ENCODE measurements at regions of chr20 and their contacts with region 1.

Region 1: GRCh38 chr20:54382422-54382821 is 93.0 kb upstream of the DOK5 start:
- DNase-seq: no peak

Region 2: GRCh38 chr20:54284934-54285704 is 97.3 kb before region 1 on chr20:
- intact Hi-C with region 1: no loop called
- DNase-seq: no peak

Region 3: GRCh38 chr20:54449158-54449557 is 66.7 kb after region 1 on chr20:
- intact Hi-C with region 1: loop called (anchors 10 kb)
- DNase-seq: no peak